Transverse colon (tissue), 4 donors: ENCODE measurements at regions of chr22 and their contacts with region 1.

Region 1: GRCh38 chr22:49525801-49526535 is 301.7 kb downstream of the BRD1 start:
- DNase-seq: no peak
- H3K4me3 ChIP-seq: no peak overlapping the region
- H3K27ac ChIP-seq: no peak overlapping the region
- H3K4me1 ChIP-seq: no peaks in the 10 kb centered on the region
- H3K27me3 ChIP-seq: no peaks in the 10 kb centered on the region
- CTCF ChIP-seq: no peak
- EP300 ChIP-seq: no peak
- POLR2A ChIP-seq: no peak

Region 2: GRCh38 chr22:48198489-48199459 is 1327.2 kb before region 1 on chr22:
- in situ Hi-C with region 1: no loop called
- intact Hi-C with region 1: loop called (anchors 5 kb)
- DNase-seq: no peak
- H3K4me3 ChIP-seq: no peak overlapping the region
- H3K27ac ChIP-seq: no peak overlapping the region
- H3K4me1 ChIP-seq: no peaks in the 10 kb centered on the region
- H3K27me3 ChIP-seq: peaks cover 8% of the 10 kb centered on the region
- CTCF ChIP-seq: no peak
- EP300 ChIP-seq: no peak
- POLR2A ChIP-seq: no peak

Region 3: GRCh38 chr22:49481659-49482399 is 44.1 kb before region 1 on chr22:
- in situ Hi-C with region 1: no loop called
- intact Hi-C with region 1: loop called (anchors 1 kb)
- DNase-seq: no peak
- H3K4me3 ChIP-seq: no peak overlapping the region
- H3K27ac ChIP-seq: no peak overlapping the region
- H3K4me1 ChIP-seq: no peaks in the 10 kb centered on the region
- H3K27me3 ChIP-seq: peaks cover 29% of the 10 kb centered on the region
- CTCF ChIP-seq: no peak
- EP300 ChIP-seq: no peak
- POLR2A ChIP-seq: no peak